Endothelial cell of umbilical vein (primary cell): ENCODE measurements at regions of chr17 and their contacts with region 1.

Region 1: DNA sequence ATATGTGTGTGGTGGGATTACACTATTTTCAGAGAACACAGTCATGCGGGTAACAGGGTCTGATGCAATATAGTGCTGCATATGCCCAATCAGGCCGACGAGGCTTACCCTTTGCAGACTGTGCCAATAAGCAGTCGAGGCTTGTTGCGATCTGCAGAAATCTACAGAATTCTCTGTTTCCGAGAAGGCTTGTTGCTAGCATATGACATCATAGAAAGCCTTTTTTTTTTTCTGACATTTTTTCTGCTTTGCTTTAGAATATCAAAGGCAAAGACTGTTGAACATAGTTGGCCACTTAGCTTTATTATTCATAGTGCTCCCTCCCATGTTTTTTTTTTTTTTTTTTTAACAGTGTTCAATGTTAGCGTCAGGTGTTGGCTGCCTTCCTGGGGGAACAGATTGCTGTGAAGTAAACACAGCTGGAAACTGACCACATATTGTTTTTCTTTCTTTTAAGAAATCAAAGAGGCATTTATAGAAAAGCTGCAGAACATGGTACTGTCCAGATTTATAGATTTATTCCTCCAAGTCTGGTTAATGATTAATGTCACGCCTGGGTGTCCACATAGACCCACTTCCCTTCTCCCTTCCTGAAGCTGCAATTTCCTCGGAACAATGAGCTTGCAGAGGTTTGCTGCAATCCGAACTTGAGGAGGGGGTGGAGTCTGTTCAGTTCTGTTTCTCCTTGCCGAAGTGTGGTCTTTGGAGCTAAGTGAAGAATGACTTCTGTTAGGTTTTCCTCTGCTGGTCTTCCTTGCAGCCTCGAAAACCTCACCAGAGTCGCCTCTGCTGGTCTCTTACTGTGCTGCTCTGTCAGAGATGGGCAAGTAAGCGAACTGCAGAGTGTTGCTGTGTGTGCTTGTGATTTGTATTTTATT is 87.3 kb downstream of the MAP2K6 start:
- DNase-seq: peak; percentile 59
- H3K4me3 ChIP-seq: peak overlapping the region in 1 of 3 experiments; percentile 46
- H3K27ac ChIP-seq: peak overlapping the region; percentile 21
- H3K4me1 ChIP-seq: peaks cover 12% of the 10 kb centered on the region
- H3K27me3 ChIP-seq: no peaks in the 10 kb centered on the region
- CTCF ChIP-seq: no peak
- POLR2A ChIP-seq: no peak

Region 2: GRCh38 chr17:69480245-69480644 is 21.6 kb before region 1 on chr17:
- CTCF ChIA-PET with region 1: interaction called, 11 read pairs
- POLR2A ChIA-PET with region 1: no interaction called
- dilution Hi-C with region 1: no loop called
- intact Hi-C with region 1: no loop called
- DNase-seq: peak; percentile 41
- H3K4me3 ChIP-seq: no peak overlapping the region
- H3K27ac ChIP-seq: no peak overlapping the region
- H3K4me1 ChIP-seq: peaks cover 12% of the 10 kb centered on the region
- H3K27me3 ChIP-seq: no peaks in the 10 kb centered on the region
- CTCF ChIP-seq: no peak
- POLR2A ChIP-seq: no peak

Region 3: DNA sequence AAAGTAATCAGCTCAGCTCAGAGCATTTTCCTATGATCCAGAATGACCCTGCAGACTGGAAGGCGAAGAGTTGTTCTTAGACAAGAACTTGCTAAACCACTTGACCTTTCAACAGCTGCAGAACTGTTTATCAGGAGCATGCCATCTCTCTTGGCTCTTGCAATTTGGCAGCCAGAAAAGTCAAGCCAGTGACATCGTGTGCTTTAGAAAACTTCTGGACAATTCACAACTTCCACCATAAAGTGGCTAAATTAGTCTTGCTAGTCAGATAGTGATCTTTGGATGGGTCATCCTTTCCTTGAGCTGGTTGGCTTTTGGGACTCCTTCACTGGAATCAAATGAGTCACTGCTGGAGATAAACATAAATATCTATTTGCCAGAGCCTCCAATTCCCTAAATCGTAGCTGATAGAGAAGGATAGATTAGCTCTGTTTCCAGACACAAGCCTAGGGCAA is 59.2 kb after region 1 on chr17:
- CTCF ChIA-PET with region 1: no interaction called
- POLR2A ChIA-PET with region 1: no interaction called
- dilution Hi-C with region 1: no loop called
- intact Hi-C with region 1: no loop called
- DNase-seq: no peak
- H3K4me3 ChIP-seq: no peak overlapping the region
- H3K27ac ChIP-seq: no peak overlapping the region
- H3K4me1 ChIP-seq: no peaks in the 10 kb centered on the region
- H3K27me3 ChIP-seq: peaks cover 0 to 4% of the 10 kb centered on the region in 2 experiments
- CTCF ChIP-seq: no peak
- POLR2A ChIP-seq: no peak